ENCODE measurements at regions of chr16 and their contacts with region 1.

Region 1: DNA sequence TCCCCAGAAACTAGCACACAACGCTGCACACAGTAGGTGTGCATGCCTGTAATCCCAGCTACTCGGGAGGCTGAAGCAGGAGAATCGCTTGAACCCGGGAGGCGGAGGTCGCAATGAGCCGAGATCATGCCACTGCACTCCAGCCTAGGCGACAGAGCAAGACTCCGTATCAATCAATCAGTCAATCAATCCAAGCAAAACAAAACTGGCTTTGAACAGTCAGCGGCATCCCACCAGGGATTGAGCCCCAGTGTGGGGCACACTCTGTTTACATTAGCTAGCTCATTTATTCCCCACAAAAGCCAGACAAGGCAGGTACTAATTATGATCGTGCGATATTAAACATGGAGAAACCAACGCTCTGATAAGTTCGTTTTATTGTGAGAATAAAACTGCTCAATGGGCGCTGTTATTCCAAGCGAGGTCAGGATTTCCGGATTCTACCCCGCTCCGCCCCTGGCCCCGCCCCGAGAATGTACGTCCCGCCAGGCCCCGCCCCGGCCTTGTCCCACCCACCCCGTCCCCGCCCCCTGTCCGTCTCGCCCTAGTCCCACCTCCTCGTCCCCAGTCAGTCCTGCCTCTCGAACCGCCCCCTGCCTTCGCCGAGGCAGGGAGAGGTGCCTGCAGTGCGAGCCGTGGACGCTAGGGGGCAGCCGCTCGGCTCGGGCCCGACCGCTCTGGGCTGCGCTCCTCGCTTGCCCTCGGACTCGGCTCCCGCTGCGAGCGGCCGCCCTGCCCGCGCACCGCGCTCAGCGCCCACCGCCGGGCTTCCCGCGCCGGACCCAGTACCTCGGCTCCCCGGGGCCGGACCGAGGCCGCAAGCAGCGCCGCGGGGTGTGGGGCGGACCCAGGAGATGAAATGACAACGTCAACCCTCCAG is at the start of gene VPS4A:
- DNase-seq: peak; percentile 96 to 99 (median 97)
- ATAC-seq: peak; percentile 97
- H3K4me3 ChIP-seq: peak within 1 kb of the TSS; percentile 64
- H3K4me3 Mint-ChIP-seq: peak within 1 kb of the TSS; percentile 99
- H3K27ac ChIP-seq: peak within 1 kb of the TSS; percentile 66 to 75
- H3K27ac Mint-ChIP-seq: peak within 1 kb of the TSS; percentile 92
- H3K4me1 ChIP-seq: peaks cover 38% of the 10 kb centered on the region
- H3K4me1 Mint-ChIP-seq: peaks cover 34% of the 10 kb centered on the region
- H3K27me3 ChIP-seq: no peaks in the 10 kb centered on the region
- H3K27me3 Mint-ChIP-seq: no peaks in the 10 kb centered on the region
- CTCF ChIP-seq: peak; percentile 70
- total RNA-seq, gene VPS4A: 57.8 to 62.4 TPM

Region 2: GRCh38 chr16:68776821-68777351 is 534.0 kb before region 1 on chr16:
- CTCF ChIA-PET with region 1: no interaction called
- POLR2A ChIA-PET with region 1: no interaction called
- intact Hi-C with region 1: no loop called
- DNase-seq: peak in 1 of 14 experiments; percentile 37
- ATAC-seq: no peak
- H3K4me3 ChIP-seq: no peak overlapping the region
- H3K4me3 Mint-ChIP-seq: no peak overlapping the region
- H3K27ac ChIP-seq: no peak overlapping the region
- H3K27ac Mint-ChIP-seq: no peak overlapping the region
- H3K4me1 ChIP-seq: no peaks in the 10 kb centered on the region
- H3K4me1 Mint-ChIP-seq: peaks cover 5% of the 10 kb centered on the region
- H3K27me3 ChIP-seq: no peaks in the 10 kb centered on the region
- H3K27me3 Mint-ChIP-seq: no peaks in the 10 kb centered on the region
- CTCF ChIP-seq: no peak

Region 3: DNA sequence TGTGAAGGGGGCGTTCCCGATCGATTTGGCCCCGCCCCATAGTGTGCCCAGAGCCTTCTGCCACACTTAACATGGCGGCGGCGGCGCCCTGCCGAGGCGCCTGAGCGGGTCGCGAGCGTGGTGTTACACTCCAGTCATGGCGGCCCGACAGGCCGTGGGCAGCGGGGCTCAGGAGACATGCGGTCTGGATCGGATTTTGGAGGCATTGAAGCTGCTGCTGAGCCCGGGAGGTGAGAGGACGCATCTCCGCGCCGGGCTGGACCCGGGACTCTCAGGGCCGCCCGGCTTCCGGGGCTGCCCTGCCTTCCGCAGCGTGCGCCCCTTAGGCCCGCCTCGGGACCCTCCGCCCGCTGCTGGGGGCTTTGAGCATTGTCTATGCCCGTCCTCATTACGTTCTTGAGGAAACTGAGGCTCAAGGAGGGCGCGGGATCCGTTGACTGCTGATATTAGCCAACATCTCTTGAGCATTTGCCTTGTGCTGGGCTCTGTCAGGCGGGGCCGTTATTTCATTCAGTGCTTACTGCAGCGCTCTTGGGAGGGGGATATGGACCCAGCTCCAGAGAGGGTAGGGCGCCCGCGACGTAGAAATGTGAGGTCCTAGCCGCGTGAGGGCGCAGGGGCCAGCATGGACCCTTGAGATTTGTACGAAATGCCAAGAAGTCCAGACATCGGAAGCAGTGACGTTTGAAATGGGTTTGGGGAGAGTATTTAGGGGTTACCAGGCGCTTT is 467.2 kb before region 1 on chr16 and contains the start of gene TANGO6:
- CTCF ChIA-PET with region 1: no interaction called
- POLR2A ChIA-PET with region 1: no interaction called
- intact Hi-C with region 1: loop called in 1 of 2 experiments (anchors 5 kb)
- DNase-seq: peak; percentile 81 to 95 (median 89)
- ATAC-seq: peak; percentile 96
- H3K4me3 ChIP-seq: peak within 1 kb of the TSS; percentile 82
- H3K4me3 Mint-ChIP-seq: peak within 1 kb of the TSS; percentile 94
- H3K27ac ChIP-seq: peak within 1 kb of the TSS; percentile 55 to 68
- H3K27ac Mint-ChIP-seq: peak within 1 kb of the TSS; percentile 60
- H3K4me1 ChIP-seq: peaks cover 28% of the 10 kb centered on the region
- H3K4me1 Mint-ChIP-seq: peaks cover 28% of the 10 kb centered on the region
- H3K27me3 ChIP-seq: no peaks in the 10 kb centered on the region
- H3K27me3 Mint-ChIP-seq: no peaks in the 10 kb centered on the region
- CTCF ChIP-seq: peak; percentile 18
- total RNA-seq, gene TANGO6: 17.1 to 18.1 TPM

Region 4: GRCh38 chr16:69330286-69331109 is 19.6 kb after region 1 on chr16 and contains the start of gene PDF:
- CTCF ChIA-PET with region 1: no interaction called
- POLR2A ChIA-PET with region 1: interaction called, 8 read pairs
- intact Hi-C with region 1: loop called in 1 of 2 experiments (anchors 1 kb)
- DNase-seq: peak; percentile 47 to 91 (median 78)
- ATAC-seq: peak; percentile 86
- H3K4me3 ChIP-seq: peak within 1 kb of the TSS; percentile 61
- H3K4me3 Mint-ChIP-seq: peak within 1 kb of the TSS; percentile 82
- H3K27ac ChIP-seq: peak within 1 kb of the TSS in 1 of 2 donors; percentile 86
- H3K27ac Mint-ChIP-seq: peak within 1 kb of the TSS; percentile 72
- H3K4me1 ChIP-seq: peaks cover 49% of the 10 kb centered on the region
- H3K4me1 Mint-ChIP-seq: peaks cover 52% of the 10 kb centered on the region
- H3K27me3 ChIP-seq: no peaks in the 10 kb centered on the region
- H3K27me3 Mint-ChIP-seq: no peaks in the 10 kb centered on the region
- CTCF ChIP-seq: no peak
- total RNA-seq, gene PDF: 2.8 to 2.9 TPM

Region 5: GRCh38 chr16:69424053-69424934 is 113.4 kb after region 1 on chr16 and contains the start of gene CYB5B:
- CTCF ChIA-PET with region 1: no interaction called
- POLR2A ChIA-PET with region 1: no interaction called
- intact Hi-C with region 1: loop called in 1 of 2 experiments (anchors 5 kb)
- DNase-seq: peak; percentile 90 to 99 (median 96)
- ATAC-seq: peak; percentile 90
- H3K4me3 ChIP-seq: peak within 1 kb of the TSS; percentile 96
- H3K4me3 Mint-ChIP-seq: peak within 1 kb of the TSS; percentile 92
- H3K27ac ChIP-seq: peak within 1 kb of the TSS; percentile 58 to 84
- H3K27ac Mint-ChIP-seq: peak within 1 kb of the TSS; percentile 86
- H3K4me1 ChIP-seq: peaks cover 20% of the 10 kb centered on the region
- H3K4me1 Mint-ChIP-seq: peaks cover 36% of the 10 kb centered on the region
- H3K27me3 ChIP-seq: no peaks in the 10 kb centered on the region
- H3K27me3 Mint-ChIP-seq: no peaks in the 10 kb centered on the region
- CTCF ChIP-seq: no peak
- total RNA-seq, gene CYB5B: 16.0 to 18.3 TPM

Region 6: DNA sequence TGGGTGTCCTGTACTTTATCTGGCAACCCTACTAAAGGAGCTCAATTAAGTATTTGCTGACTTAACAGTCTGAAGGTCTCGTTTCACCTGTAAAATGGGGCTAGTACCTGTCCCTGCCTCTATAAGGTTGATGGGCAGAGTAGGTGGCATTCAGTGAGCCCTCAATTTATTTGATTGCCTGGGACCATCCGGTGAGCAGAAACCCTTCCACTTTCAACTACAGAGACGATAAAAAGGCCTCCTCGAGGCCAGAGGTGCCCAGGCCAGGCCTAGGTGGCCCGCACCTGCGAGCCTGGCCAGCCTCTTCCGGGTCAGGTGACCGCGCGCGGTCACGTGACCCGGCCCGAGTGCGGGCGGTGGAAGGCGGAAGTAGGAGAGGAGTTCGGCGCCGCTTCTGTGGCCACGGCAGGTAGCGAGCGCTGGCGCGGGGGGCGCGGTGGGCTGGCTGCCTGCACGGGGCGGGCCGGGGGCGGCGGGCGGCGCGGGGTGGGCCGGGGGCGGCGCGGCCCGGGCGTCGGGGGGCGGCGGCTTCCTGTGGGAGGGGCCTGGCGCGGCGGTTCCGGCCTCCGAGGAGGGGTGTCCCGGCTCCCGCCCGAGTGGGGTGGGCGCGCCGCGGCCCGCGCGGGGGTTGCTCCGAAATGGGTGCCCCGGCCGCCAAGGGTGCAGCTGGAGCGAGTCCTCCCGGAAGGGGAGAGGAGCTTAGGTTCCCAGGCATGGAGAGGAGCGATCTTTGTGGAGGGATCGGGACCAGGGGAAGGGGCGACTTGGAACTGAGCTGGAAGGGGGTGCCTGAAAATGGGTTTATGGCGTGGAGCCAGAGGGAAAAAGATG is 451.3 kb after region 1 on chr16 and contains the start of gene WWP2:
- CTCF ChIA-PET with region 1: no interaction called
- POLR2A ChIA-PET with region 1: no interaction called
- intact Hi-C with region 1: loop called in 1 of 2 experiments (anchors 2 kb)
- DNase-seq: peak; percentile 55 to 93 (median 74)
- ATAC-seq: peak; percentile 72
- H3K4me3 ChIP-seq: peak within 1 kb of the TSS; percentile 98
- H3K4me3 Mint-ChIP-seq: peak within 1 kb of the TSS; percentile 93
- H3K27ac ChIP-seq: peak within 1 kb of the TSS; percentile 89 to 92
- H3K27ac Mint-ChIP-seq: peak within 1 kb of the TSS; percentile 98
- H3K4me1 ChIP-seq: peaks cover 20% of the 10 kb centered on the region
- H3K4me1 Mint-ChIP-seq: peaks cover 34% of the 10 kb centered on the region
- H3K27me3 ChIP-seq: no peaks in the 10 kb centered on the region
- H3K27me3 Mint-ChIP-seq: no peaks in the 10 kb centered on the region
- CTCF ChIP-seq: no peak
- total RNA-seq, gene WWP2: 41.9 to 43.0 TPM

Measured in CD4-positive, alpha-beta T cell (primary cell).